Dendritic cell treated with granulocyte-macrophage colony-stimulating factor and Interleukin-4, amounts not matched to agents 40 ng/mL and 50 ng/mL, for 4 days (primary cell): ENCODE measurements at regions of chr5 and their contacts with region 1.

Region 1: GRCh38 chr5:68331192-68332079 is 115.9 kb downstream of the PIK3R1 start:
- H3K4me3 Mint-ChIP-seq: no peak overlapping the region
- H3K27ac Mint-ChIP-seq: peak overlapping the region; percentile 74
- H3K4me1 Mint-ChIP-seq: peaks cover 35% of the 10 kb centered on the region
- H3K27me3 Mint-ChIP-seq: peaks cover 24% of the 10 kb centered on the region

Region 2: GRCh38 chr5:68433923-68434879 is 102.8 kb after region 1 on chr5:
- intact Hi-C with region 1: loop called (anchors 1 kb)
- H3K4me3 Mint-ChIP-seq: peak overlapping the region; percentile 61
- H3K27ac Mint-ChIP-seq: peak overlapping the region; percentile 97
- H3K4me1 Mint-ChIP-seq: peaks cover 54% of the 10 kb centered on the region
- H3K27me3 Mint-ChIP-seq: peaks cover 17% of the 10 kb centered on the region